Activated CD4-positive, alpha-beta memory T cell treated with anti-CD3 and anti-CD28 coated beads for 36 hours (primary cell): ENCODE measurements at regions of chr12 and their contacts with region 1.

Region 1: GRCh38 chr12:6944381-6945186 is 762 bp downstream of the C12orf57 start:
- DNase-seq: peak; percentile 95
- H3K4me3 Mint-ChIP-seq: peak overlapping the region; percentile 90
- H3K27ac Mint-ChIP-seq: peak overlapping the region; percentile 100
- H3K4me1 Mint-ChIP-seq: peaks cover 56% of the 10 kb centered on the region
- H3K27me3 Mint-ChIP-seq: peaks cover 6% of the 10 kb centered on the region

Region 2: DNA sequence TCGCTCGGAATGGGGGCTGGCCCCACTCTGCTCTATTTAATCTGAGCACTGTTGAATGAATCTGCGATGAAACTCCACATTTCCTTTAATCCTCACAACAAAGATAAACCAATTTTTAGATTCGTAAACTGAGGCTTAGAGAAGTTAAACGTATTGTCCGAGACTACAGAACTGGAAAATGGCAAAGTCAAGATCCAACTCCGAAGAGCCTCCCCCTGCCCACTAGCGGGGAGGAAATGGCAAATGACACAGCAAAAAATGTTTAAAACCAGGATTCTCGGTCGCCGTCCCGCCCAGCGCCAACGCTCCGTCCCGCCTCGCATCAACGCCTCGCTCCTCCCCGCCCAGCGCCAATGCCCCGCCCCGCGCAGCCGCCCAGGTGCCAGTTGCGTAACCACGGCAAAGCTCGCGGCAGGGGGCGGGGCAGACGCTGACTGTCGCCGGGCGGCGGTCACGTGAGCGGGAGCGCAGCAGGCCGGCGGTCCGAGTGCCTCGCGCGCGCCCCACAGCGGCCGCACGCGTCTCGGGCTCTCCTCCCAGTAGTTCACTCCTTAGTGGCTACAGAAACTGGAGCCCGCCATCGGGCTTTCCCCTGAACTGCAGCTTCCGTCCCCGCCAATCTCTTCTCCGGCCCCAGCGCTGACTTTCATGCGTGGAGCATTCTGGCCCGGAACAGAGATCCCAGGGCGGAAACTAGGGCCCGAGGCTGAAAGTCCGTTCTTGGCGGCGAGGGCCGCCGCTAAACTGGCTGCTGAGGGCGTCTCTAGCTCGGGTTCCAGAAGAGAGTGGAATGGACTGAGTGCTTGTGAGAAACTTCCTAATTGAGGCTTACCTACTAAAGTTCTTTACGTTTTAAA is 53.6 kb before region 1 on chr12:
- CTCF ChIA-PET with region 1: interaction called, 6 read pairs
- POLR2A ChIA-PET with region 1: interaction called, 8 read pairs
- intact Hi-C with region 1: loop called (anchors 1 kb)
- DNase-seq: peak; percentile 99
- H3K4me3 Mint-ChIP-seq: peak overlapping the region; percentile 84
- H3K27ac Mint-ChIP-seq: peak overlapping the region; percentile 97
- H3K4me1 Mint-ChIP-seq: peaks cover 17% of the 10 kb centered on the region
- H3K27me3 Mint-ChIP-seq: no peaks in the 10 kb centered on the region

Region 3: DNA sequence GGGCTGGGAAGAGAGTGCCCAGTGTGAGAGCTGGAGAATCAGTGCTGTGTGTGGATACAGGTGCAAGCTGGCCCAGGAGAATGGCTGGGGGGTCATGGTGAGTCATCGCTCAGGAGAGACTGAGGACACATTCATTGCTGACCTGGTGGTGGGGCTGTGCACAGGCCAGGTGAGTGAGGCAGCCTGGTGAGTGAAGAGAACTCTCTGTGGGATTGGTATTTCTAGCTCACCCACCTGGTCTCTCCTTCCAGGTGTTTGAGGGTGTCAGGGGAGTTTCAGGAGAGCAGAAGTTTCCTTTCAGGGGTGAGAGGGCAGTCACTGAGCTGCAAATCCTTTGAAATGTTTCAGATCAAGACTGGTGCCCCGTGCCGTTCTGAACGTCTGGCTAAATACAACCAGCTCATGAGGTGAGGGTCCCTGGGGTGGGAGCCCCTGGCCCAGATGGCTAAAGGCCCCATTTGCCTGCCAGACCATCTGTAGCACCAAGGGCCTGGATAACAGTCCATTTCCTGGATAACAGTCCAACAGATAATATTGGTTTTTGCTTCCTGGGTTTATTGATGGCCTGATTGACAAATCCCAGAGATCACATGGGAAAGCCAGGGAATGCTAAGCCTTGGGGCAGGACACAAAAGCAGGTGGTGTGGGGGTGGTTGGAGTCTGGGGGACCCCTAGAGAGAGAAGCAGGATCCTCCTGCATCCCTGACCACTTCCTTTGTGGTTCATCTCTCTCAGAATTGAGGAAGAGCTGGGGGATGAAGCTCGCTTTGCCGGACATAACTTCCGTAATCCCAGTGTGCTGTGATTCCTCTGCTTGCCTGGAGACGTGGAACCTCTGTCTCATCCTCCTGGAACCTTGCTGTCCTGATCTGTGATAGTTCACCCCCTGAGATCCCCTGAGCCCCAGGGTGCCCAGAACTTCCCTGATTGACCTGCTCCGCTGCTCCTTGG is 22.3 kb before region 1 on chr12:
- CTCF ChIA-PET with region 1: interaction called, 42 read pairs
- POLR2A ChIA-PET with region 1: interaction called, 39 read pairs
- intact Hi-C with region 1: loop called (anchors 1 kb)
- DNase-seq: no peak
- H3K4me3 Mint-ChIP-seq: no peak overlapping the region
- H3K27ac Mint-ChIP-seq: no peak overlapping the region
- H3K4me1 Mint-ChIP-seq: peaks cover 37% of the 10 kb centered on the region
- H3K27me3 Mint-ChIP-seq: no peaks in the 10 kb centered on the region

Region 4: DNA sequence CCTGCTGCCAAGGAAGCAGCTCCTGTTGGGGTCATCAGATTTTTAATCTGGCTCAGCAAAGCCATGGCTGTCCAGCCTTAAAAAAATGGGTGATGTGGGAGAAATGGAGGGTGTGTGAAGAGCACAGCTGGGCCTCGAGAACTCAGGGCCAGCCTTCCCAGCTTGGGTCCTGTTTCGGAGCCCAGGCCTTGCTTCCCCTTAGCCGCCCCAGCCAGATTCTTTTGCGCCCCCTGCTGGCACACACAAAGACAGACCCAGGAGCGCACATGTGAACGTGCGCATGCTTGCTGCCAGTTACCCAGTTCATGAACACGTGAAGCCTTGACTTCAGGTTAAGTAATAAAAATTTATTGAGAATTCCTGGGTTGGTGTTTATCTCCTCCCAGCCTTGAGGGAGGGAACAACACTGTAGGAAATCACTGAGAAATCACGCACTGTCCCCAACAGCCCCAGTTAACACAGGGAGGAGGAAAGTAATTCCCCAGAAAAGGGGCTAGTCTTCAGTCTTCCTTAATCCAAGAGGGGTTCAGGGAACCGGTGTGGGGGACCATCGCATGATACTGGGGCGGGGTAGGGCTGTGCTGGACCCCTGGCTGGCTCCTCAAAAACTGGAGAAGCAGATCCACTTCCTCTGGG is 20.6 kb after region 1 on chr12:
- CTCF ChIA-PET with region 1: interaction called, 586 read pairs
- POLR2A ChIA-PET with region 1: interaction called, 507 read pairs
- intact Hi-C with region 1: loop called (anchors 1 kb)
- DNase-seq: peak; percentile 93
- H3K4me3 Mint-ChIP-seq: no peak overlapping the region
- H3K27ac Mint-ChIP-seq: peak overlapping the region; percentile 89
- H3K4me1 Mint-ChIP-seq: peaks cover 72% of the 10 kb centered on the region
- H3K27me3 Mint-ChIP-seq: no peaks in the 10 kb centered on the region

Region 5: DNA sequence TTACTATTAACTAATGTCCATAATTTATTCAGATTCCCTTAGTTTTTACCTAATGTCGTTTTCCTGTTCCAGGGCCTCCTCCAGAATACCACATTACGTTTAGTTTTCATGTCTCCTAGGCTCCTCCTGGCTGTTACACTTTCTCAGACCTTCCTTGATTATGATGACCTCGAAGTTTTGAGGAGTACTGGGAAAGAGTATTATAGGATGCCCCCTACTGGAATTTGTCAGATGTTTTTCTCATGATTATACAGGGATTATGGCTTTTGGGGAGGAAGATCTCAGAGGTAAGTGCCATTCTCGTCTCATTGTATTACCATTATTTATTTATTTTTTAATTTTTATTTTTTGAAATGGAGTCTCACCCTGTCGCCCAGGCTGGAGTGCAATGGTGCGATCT is 98.3 kb after region 1 on chr12:
- CTCF ChIA-PET with region 1: no interaction called
- POLR2A ChIA-PET with region 1: interaction called, 3 read pairs
- intact Hi-C with region 1: loop called (anchors 1 kb)
- DNase-seq: no peak
- H3K4me3 Mint-ChIP-seq: no peak overlapping the region
- H3K27ac Mint-ChIP-seq: no peak overlapping the region
- H3K4me1 Mint-ChIP-seq: peaks cover 7% of the 10 kb centered on the region
- H3K27me3 Mint-ChIP-seq: no peaks in the 10 kb centered on the region

Region 6: GRCh38 chr12:7108796-7109571 is 164.4 kb after region 1 on chr12 and contains the start of gene C1RL:
- CTCF ChIA-PET with region 1: interaction called, 37 read pairs
- POLR2A ChIA-PET with region 1: interaction called, 59 read pairs
- intact Hi-C with region 1: loop called (anchors 1 kb)
- DNase-seq: peak; percentile 89
- H3K4me3 Mint-ChIP-seq: peak within 1 kb of the TSS; percentile 95
- H3K27ac Mint-ChIP-seq: peak within 1 kb of the TSS; percentile 99
- H3K4me1 Mint-ChIP-seq: peaks cover 39% of the 10 kb centered on the region
- H3K27me3 Mint-ChIP-seq: no peaks in the 10 kb centered on the region
- total RNA-seq, gene C1RL: 17.1 to 22.6 TPM